MCF 10A (cell line): ENCODE measurements at regions of chr16 and their contacts with region 1.

Region 1: DNA sequence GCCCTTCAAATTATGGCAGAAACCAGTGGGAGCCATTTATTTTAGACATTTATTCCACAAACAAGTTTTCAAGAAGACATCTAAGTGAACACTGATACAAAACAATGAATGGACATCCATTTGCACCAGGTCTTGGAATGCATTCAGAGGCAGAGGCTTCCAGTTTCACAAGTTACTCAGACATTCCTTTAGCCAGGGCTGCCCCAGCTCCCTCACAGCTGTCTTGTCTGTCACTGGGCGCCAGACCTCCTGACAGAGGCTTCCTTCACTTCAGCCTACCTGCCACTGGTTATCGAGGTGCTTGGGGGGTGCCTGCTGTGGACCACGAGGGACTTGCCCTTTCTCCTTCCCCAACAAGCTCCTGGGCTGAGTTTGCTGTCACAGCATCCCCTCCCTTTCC is 19.2 kb downstream of the AQP8 start:
- DNase-seq: no peak
- H3K4me3 Mint-ChIP-seq: no peak overlapping the region
- H3K27ac Mint-ChIP-seq: no peak overlapping the region
- H3K4me1 Mint-ChIP-seq: no peaks in the 10 kb centered on the region
- H3K27me3 Mint-ChIP-seq: no peaks in the 10 kb centered on the region
- CTCF ChIP-seq: no peak

Region 2: DNA sequence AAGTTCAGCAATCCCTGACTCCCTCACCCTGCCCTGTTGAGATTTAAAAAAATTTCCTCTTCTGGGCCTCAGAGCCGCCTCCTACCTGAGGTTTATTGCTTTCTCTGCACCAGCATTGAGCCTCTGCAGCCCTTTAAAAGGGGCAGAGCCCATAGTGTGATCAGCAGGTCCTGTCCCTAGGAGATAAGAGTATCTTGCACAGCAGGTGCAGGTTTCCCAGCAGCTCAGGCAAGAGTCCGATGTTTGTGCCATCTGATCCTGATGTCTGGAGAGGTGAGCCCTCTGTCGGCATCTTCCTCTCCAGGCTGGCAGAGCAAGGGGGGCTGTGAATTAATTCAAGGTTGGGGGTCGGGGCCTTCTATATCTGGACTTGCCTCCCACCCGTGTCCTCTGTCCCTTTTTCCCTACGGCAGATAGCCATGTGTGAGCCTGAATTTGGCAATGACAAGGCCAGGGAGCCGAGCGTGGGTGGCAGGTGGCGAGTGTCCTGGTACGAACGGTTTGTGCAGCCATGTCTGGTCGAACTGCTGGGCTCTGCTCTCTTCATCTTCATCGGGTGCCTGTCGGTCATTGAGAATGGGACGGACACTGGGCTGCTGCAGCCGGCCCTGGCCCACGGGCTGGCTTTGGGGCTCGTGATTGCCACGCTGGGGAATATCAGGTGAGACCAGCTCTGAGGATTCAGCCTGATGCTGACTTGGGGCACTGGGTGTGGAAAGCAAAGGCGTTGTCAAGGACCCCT is 19.0 kb before region 1 on chr16 and contains the start of gene AQP8:
- CTCF ChIA-PET with region 1: interaction called, 95 read pairs
- POLR2A ChIA-PET with region 1: no interaction called
- intact Hi-C with region 1: no loop called
- DNase-seq: no peak
- H3K4me3 Mint-ChIP-seq: no peak within 1 kb of the TSS
- H3K27ac Mint-ChIP-seq: no peak within 1 kb of the TSS
- H3K4me1 Mint-ChIP-seq: no peaks in the 10 kb centered on the region
- H3K27me3 Mint-ChIP-seq: peaks cover 31% of the 10 kb centered on the region
- CTCF ChIP-seq: no peak
- total RNA-seq, gene AQP8: not detected in 2 replicates

Region 3: GRCh38 chr16:25950586-25951281 is 714.7 kb after region 1 on chr16:
- CTCF ChIA-PET with region 1: no interaction called
- POLR2A ChIA-PET with region 1: no interaction called
- intact Hi-C with region 1: no loop called
- DNase-seq: no peak
- H3K4me3 Mint-ChIP-seq: no peak overlapping the region
- H3K27ac Mint-ChIP-seq: no peak overlapping the region
- H3K4me1 Mint-ChIP-seq: no peaks in the 10 kb centered on the region
- H3K27me3 Mint-ChIP-seq: no peaks in the 10 kb centered on the region
- CTCF ChIP-seq: no peak